PC-9 (cell line): ENCODE measurements at regions of chr1 and their contacts with region 1.

Region 1: GRCh38 chr1:168520052-168520751 is 23.6 kb downstream of the XCL2 start:
- DNase-seq: no peak
- H3K4me3 ChIP-seq: no peak overlapping the region
- H3K27ac ChIP-seq: no peak overlapping the region
- H3K4me1 ChIP-seq: no peaks in the 10 kb centered on the region
- H3K27me3 ChIP-seq: no peaks in the 10 kb centered on the region
- CTCF ChIP-seq: no peak

Region 2: GRCh38 chr1:168466092-168466713 is 54.0 kb before region 1 on chr1:
- CTCF ChIA-PET with region 1: no interaction called
- POLR2A ChIA-PET with region 1: no interaction called
- intact Hi-C with region 1: loop called (anchors 5 kb)
- DNase-seq: no peak
- H3K4me3 ChIP-seq: no peak overlapping the region
- H3K27ac ChIP-seq: no peak overlapping the region
- H3K4me1 ChIP-seq: no peaks in the 10 kb centered on the region
- H3K27me3 ChIP-seq: no peaks in the 10 kb centered on the region
- CTCF ChIP-seq: no peak

Region 3: DNA sequence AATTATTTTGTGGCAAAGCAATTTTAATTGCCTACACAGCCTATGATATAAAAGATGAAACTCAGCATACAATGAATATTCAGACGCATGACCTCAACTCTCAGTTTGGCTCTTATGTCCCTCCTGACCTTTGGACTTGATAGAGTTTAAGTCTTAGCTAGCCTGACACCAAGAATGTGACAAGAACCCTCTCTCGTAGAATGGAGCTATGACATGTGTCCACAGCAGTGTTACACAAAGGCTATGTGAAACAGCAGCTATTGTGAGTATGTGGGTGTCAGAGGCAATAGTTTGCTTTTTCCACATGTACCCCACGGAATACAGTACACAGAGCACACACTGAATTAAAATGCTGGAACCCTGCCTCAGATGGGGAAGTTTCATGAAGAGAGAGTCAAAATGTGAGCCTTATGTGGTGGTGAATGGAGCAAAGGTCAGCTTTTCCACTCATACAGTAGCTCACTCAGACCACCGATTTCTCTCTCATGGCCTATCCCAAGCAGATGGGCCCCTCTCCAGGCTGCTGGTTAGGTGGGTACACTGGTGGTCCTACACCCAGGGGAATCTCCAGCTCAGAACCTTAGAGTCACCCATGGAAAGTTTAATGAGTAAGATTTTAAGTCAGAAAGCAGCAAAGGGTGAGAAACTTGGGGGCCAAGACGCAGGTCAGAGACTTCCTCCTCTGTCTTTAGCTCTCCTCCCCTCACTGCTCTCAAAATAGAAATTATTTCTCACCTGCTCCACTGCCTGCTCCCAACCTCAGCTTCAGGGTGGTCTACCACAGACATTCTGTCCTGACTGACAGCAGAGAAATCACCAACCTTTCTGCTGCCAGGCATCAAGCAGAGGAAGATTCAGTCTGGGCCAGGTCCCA is 33.7 kb after region 1 on chr1:
- CTCF ChIA-PET with region 1: no interaction called
- POLR2A ChIA-PET with region 1: no interaction called
- intact Hi-C with region 1: no loop called
- DNase-seq: no peak
- H3K4me3 ChIP-seq: no peak overlapping the region
- H3K27ac ChIP-seq: no peak overlapping the region
- H3K4me1 ChIP-seq: no peaks in the 10 kb centered on the region; the same call in 1 of the 2 replicates
- H3K27me3 ChIP-seq: no peaks in the 10 kb centered on the region
- CTCF ChIP-seq: no peak